Mammary epithelial cell (primary cell): ENCODE measurements at regions of chr18 and their contacts with region 1.

Region 1: DNA sequence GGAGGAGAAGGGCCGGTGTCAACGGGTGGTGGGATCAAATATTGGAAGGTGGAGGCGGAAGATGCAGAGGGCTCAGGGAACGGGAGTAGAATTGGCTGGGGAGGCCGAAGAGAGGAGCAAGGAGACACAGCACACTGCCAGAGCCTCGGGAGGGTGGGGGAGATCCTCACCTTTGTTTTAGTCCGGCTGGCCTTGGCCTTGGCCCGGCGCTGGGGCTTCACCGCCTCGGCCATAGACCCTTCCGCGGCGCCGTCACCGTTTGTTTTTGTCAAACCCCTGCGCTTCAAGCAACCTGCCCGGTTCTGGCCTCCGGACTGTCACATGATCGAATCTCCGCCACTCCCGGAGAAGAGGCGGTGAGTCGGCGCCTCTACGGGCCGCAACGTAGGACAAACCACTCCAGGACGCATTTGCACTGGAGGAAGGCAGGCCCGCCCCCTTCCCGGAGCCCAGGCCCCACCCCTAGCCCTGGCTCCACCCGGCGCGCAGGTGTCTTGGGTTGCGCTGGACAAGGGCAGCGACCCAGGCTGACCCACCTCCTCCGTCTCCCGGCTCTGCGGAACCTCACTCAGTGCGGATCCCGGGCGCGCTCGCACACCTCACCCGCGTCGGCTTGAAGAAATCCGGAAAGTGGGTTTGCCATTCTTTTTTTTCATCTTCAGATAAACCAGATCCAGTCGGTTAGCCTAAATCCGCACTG is at the start of gene EPG5:
- DNase-seq: peak; percentile 96
- H3K4me3 ChIP-seq: peak within 1 kb of the TSS; percentile 78 to 93 (median 89)
- H3K27ac ChIP-seq: peak within 1 kb of the TSS; percentile 67
- H3K4me1 ChIP-seq: peaks cover 6% of the 10 kb centered on the region
- H3K27me3 ChIP-seq: no peaks in the 10 kb centered on the region
- CTCF ChIP-seq: no peak
- total RNA-seq, gene EPG5: 26.3 to 44.8 TPM

Region 2: GRCh38 chr18:44715245-44715644 is 1251.9 kb before region 1 on chr18:
- CTCF ChIA-PET with region 1: no interaction called
- dilution Hi-C with region 1: no loop called
- in situ Hi-C with region 1: no loop called
- intact Hi-C with region 1: loop called (anchors 5 kb)
- DNase-seq: peak; percentile 66
- H3K4me3 ChIP-seq: no peak overlapping the region
- H3K27ac ChIP-seq: peak overlapping the region; percentile 24
- H3K4me1 ChIP-seq: peaks cover 23% of the 10 kb centered on the region
- H3K27me3 ChIP-seq: no peaks in the 10 kb centered on the region
- CTCF ChIP-seq: no peak

Region 3: GRCh38 chr18:45690975-45691815 is 276.0 kb before region 1 on chr18:
- CTCF ChIA-PET with region 1: no interaction called
- dilution Hi-C with region 1: no loop called
- in situ Hi-C with region 1: no loop called
- intact Hi-C with region 1: no loop called
- DNase-seq: peak; percentile 66
- H3K4me3 ChIP-seq: no peak overlapping the region
- H3K27ac ChIP-seq: no peak overlapping the region
- H3K4me1 ChIP-seq: no peaks in the 10 kb centered on the region
- H3K27me3 ChIP-seq: no peaks in the 10 kb centered on the region
- CTCF ChIP-seq: peak; percentile 85 to 88

Region 4: GRCh38 chr18:45793306-45793965 is 173.7 kb before region 1 on chr18:
- CTCF ChIA-PET with region 1: no interaction called
- dilution Hi-C with region 1: no loop called
- in situ Hi-C with region 1: no loop called
- intact Hi-C with region 1: loop called (anchors 1 kb)
- DNase-seq: peak; percentile 99
- H3K4me3 ChIP-seq: no peak overlapping the region
- H3K27ac ChIP-seq: peak overlapping the region; percentile 80
- H3K4me1 ChIP-seq: peaks cover 16% of the 10 kb centered on the region
- H3K27me3 ChIP-seq: no peaks in the 10 kb centered on the region
- CTCF ChIP-seq: no peak

Region 5: GRCh38 chr18:45910405-45911023 is 56.6 kb before region 1 on chr18:
- CTCF ChIA-PET with region 1: no interaction called
- dilution Hi-C with region 1: no loop called
- in situ Hi-C with region 1: no loop called
- intact Hi-C with region 1: loop called (anchors 5 kb)
- DNase-seq: peak; percentile 32
- H3K4me3 ChIP-seq: no peak overlapping the region
- H3K27ac ChIP-seq: no peak overlapping the region
- H3K4me1 ChIP-seq: no peaks in the 10 kb centered on the region
- H3K27me3 ChIP-seq: no peaks in the 10 kb centered on the region
- CTCF ChIP-seq: peak; percentile 87 to 96

Region 6: DNA sequence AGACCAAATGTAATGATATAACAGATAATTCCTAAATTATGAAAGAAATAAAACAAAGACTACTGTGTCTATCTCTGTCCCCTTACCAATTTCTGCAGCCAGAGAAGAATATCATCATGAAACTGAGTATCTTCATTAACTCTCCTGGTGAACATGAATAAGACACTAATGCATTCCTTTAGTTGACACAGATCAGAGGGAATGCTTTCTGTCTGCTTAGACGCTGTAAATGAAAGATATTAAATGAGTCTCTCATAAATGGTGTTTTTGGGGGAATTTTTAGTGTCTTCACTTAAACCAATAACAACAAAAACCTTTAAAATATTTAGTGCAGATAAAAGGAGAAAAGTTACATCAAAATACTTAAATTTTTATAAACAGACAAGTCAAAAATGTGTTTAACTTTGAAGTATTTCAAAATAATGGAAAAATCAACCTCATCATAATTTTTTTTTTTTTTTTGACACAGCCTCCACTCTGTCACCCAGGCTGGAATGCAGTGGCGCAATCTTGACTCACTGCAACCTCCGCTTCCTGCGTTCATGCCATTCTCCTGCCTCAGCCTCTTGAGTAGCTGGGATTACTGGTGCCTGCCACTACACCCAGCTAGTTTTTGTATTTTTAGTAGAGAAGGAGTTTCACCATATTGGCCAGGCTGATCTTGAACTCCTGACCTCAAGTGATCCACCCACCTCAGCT is 16.0 kb before region 1 on chr18:
- CTCF ChIA-PET with region 1: no interaction called
- dilution Hi-C with region 1: no loop called
- in situ Hi-C with region 1: no loop called
- intact Hi-C with region 1: loop called (anchors 1 kb)
- DNase-seq: peak; percentile 86
- H3K4me3 ChIP-seq: no peak overlapping the region
- H3K27ac ChIP-seq: no peak overlapping the region
- H3K4me1 ChIP-seq: peaks cover 21% of the 10 kb centered on the region
- H3K27me3 ChIP-seq: no peaks in the 10 kb centered on the region
- CTCF ChIP-seq: no peak

Region 7: DNA sequence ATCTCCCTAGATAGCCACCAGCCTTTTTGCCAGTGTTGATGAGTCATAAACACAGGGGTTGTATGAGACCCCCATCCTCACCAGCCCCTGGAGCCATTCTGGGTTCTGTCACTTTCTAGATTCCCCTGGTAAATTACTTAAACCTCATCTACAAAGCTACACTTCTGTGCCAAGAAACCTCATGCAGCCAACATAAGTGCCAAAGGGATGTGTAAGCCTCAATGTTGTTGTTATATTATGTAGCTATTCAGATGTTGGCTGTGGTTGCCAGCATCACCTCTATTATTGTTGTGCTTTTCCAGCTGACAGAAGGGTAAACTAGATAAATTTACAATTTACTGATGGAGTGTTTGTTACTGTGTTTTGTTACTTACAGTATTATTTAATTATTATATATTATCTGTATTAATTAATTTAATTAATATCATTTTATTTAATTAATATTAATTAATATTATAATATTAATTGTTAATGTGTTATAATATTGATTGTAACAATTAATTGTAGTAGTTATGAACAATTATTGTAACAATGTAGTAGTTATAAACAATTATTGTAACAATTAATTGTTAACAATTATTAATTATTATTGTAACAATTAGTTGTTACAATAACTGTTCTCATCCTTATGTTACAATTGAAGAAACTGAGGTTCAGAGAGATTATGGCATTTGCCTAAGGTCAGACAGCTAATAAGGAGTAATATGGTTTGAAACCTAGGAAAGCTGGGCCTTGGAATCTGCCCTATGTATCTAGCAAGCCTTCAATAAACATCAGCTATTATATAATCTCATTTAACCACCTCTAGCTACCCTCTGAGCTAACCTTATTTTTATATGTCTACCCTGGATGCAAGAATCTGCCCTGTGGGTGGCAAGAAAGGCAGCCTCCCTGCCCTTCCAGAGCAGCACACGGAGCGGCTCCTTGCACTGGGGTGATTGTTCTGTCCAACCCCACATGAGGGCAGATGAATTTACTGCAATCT is 68.8 kb after region 1 on chr18:
- CTCF ChIA-PET with region 1: no interaction called
- dilution Hi-C with region 1: loop called (anchors 5 kb)
- in situ Hi-C with region 1: no loop called
- intact Hi-C with region 1: no loop called
- DNase-seq: peak; percentile 28
- H3K4me3 ChIP-seq: no peak overlapping the region
- H3K27ac ChIP-seq: no peak overlapping the region
- H3K4me1 ChIP-seq: peaks cover 27% of the 10 kb centered on the region
- H3K27me3 ChIP-seq: no peaks in the 10 kb centered on the region
- CTCF ChIP-seq: no peak

Region 8: DNA sequence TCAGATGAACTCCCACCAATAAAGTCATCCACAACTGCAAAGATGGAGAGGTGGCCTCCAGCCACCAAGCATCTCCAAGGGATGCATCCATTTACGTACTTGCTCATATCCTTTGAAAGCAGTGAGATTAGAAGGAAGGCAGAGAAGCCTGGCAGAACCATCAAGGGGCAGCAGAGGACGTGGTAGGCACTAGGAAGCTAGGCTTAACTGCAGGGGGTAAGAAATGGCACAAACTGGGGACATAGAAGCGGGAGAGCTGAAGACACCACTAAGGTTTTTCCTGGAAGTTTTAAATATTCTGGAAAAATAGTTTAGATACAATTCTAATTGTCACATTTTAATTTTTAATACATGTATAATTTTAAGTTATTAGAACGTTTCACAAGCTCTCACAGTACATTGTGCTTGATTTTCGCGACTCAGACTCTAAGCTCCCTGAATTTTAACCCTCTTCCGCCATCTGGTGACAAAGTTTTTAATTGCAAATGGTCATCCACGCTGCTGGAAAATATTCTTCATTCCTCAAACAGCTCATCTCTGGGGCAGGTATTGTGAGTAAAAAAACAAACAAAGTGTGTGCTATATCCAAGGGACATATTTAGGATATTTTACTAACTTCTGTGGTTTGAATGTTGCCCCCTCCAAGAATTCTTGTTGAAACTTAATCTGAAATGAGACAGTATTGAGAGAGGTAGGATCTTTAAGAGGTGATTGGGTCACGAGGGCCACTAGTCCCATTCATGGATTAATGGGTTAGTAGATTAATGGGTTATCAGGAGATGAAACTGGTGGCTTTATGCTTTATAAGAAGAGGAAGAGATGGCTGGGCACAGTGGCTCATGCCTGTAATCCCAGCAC is 106.5 kb after region 1 on chr18:
- CTCF ChIA-PET with region 1: no interaction called
- dilution Hi-C with region 1: no loop called
- in situ Hi-C with region 1: loop called in 1 of 2 experiments (anchors 10 kb)
- intact Hi-C with region 1: no loop called
- DNase-seq: peak; percentile 63
- H3K4me3 ChIP-seq: no peak overlapping the region
- H3K27ac ChIP-seq: no peak overlapping the region
- H3K4me1 ChIP-seq: peaks cover 17% of the 10 kb centered on the region
- H3K27me3 ChIP-seq: no peaks in the 10 kb centered on the region
- CTCF ChIP-seq: peak; percentile 54 to 66

Region 9: DNA sequence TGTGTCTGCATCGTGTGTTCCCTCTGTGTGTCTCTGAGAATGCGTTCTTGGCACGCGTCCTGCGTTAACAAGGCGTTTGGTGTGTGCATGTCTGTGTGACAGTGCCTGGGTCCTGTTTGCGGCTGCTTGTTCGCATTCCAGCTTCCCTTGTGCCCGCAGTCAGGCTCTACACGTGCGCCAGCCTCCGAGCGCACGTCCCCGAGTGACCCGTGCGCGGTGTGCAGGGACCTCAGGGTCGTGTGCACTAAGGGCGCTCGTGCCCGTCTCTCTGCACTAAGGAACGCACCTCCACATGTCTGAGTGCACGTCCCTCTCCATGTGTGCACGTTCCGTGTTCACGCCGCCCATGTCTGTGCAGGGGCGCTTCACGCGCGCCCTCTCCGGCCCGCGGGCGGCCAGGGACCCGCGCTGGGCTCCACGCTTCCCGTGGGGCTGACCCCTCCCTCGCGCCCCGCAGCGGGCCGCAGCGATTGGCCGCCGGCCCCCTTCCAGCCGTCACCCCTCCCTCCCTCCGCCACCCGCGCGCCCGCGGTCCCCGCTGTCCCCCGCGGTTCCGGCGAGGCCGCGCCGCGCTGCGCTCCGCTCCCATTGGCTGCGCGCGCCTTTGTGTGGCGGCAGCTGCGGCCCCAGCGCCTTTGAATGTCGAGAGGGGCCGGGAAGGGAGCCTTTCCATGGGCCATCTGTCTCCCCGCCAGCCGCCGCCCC is 366.4 kb after region 1 on chr18:
- CTCF ChIA-PET with region 1: no interaction called
- dilution Hi-C with region 1: no loop called
- in situ Hi-C with region 1: no loop called
- intact Hi-C with region 1: no loop called
- DNase-seq: peak; percentile 45
- H3K4me3 ChIP-seq: peak overlapping the region in 2 of 3 experiments; percentile 55 to 57
- H3K27ac ChIP-seq: no peak overlapping the region
- H3K4me1 ChIP-seq: peaks cover 16% of the 10 kb centered on the region
- H3K27me3 ChIP-seq: no peaks in the 10 kb centered on the region
- CTCF ChIP-seq: no peak